SK-N-SH (cell line): ENCODE measurements at regions of chr10 and their contacts with region 1.

Region 1: GRCh38 chr10:90879062-90879461 is 7.3 kb downstream of the RPP30 start:
- DNase-seq: no peak
- H3K4me3 ChIP-seq: no peak overlapping the region
- H3K27ac ChIP-seq: no peak overlapping the region
- H3K4me1 ChIP-seq: peaks cover 0 to under 1% of the 10 kb centered on the region in 2 experiments; a peak in 2 of 4 replicates
- H3K27me3 ChIP-seq: no peaks in the 10 kb centered on the region
- CTCF ChIP-seq: no peak
- EP300 ChIP-seq: no peak
- RAD21 ChIP-seq: no peak

Region 2: GRCh38 chr10:90890347-90890746 is 11.3 kb after region 1 on chr10:
- CTCF ChIA-PET with region 1: interaction called, 26 read pairs
- POLR2A ChIA-PET with region 1: no interaction called
- DNase-seq: no peak
- H3K4me3 ChIP-seq: no peak overlapping the region
- H3K27ac ChIP-seq: no peak overlapping the region
- H3K4me1 ChIP-seq: peaks cover 0 to 4% of the 10 kb centered on the region in 2 experiments; a peak in 1 of 4 replicates
- H3K27me3 ChIP-seq: no peaks in the 10 kb centered on the region
- CTCF ChIP-seq: no peak
- EP300 ChIP-seq: no peak
- RAD21 ChIP-seq: no peak

Region 3: GRCh38 chr10:90912174-90912573 is 33.1 kb after region 1 on chr10:
- CTCF ChIA-PET with region 1: no interaction called
- POLR2A ChIA-PET with region 1: no interaction called
- DNase-seq: no peak
- H3K4me3 ChIP-seq: no peak overlapping the region
- H3K27ac ChIP-seq: peak overlapping the region; percentile 30 to 67; a peak in 2 of 4 replicates
- H3K4me1 ChIP-seq: peaks cover 4 to 7% of the 10 kb centered on the region in 2 experiments; a peak in 2 of 4 replicates
- H3K27me3 ChIP-seq: no peaks in the 10 kb centered on the region
- CTCF ChIP-seq: no peak
- EP300 ChIP-seq: no peak
- RAD21 ChIP-seq: no peak